ENCODE measurements at regions of chr1 and their contacts with region 1.

Region 1: GRCh38 chr1:55021965-55022546 is 17.3 kb upstream of the PCSK9 start:
- DNase-seq: peak; percentile 88
- ATAC-seq: peak; percentile 99
- H3K4me3 Mint-ChIP-seq: no peak overlapping the region
- H3K27ac Mint-ChIP-seq: no peak overlapping the region
- H3K4me1 Mint-ChIP-seq: no peaks in the 10 kb centered on the region
- H3K27me3 Mint-ChIP-seq: peaks cover 3% of the 10 kb centered on the region

Region 2: GRCh38 chr1:54996359-54996868 is 25.6 kb before region 1 on chr1:
- CTCF ChIA-PET with region 1: interaction called, 10 read pairs
- POLR2A ChIA-PET with region 1: no interaction called
- intact Hi-C with region 1: loop called in 1 of 2 experiments (anchors 2 kb)
- DNase-seq: peak; percentile 92
- ATAC-seq: peak; percentile 96
- H3K4me3 Mint-ChIP-seq: peak overlapping the region; percentile 24
- H3K27ac Mint-ChIP-seq: no peak overlapping the region
- H3K4me1 Mint-ChIP-seq: peaks cover 14% of the 10 kb centered on the region
- H3K27me3 Mint-ChIP-seq: peaks cover 37% of the 10 kb centered on the region

Region 3: GRCh38 chr1:55140546-55140983 is 118.5 kb after region 1 on chr1:
- CTCF ChIA-PET with region 1: no interaction called
- POLR2A ChIA-PET with region 1: no interaction called
- intact Hi-C with region 1: no loop called
- DNase-seq: peak; percentile 84
- ATAC-seq: peak; percentile 96
- H3K4me3 Mint-ChIP-seq: no peak overlapping the region
- H3K27ac Mint-ChIP-seq: peak overlapping the region; percentile 67
- H3K4me1 Mint-ChIP-seq: peaks cover 15% of the 10 kb centered on the region
- H3K27me3 Mint-ChIP-seq: no peaks in the 10 kb centered on the region

Measured in activated CD4-positive, alpha-beta T cell treated with anti-CD3 and anti-CD28 coated beads for 36 hours (primary cell).